ENCODE measurements at regions of chr18 and their contacts with region 1.

Region 1: DNA sequence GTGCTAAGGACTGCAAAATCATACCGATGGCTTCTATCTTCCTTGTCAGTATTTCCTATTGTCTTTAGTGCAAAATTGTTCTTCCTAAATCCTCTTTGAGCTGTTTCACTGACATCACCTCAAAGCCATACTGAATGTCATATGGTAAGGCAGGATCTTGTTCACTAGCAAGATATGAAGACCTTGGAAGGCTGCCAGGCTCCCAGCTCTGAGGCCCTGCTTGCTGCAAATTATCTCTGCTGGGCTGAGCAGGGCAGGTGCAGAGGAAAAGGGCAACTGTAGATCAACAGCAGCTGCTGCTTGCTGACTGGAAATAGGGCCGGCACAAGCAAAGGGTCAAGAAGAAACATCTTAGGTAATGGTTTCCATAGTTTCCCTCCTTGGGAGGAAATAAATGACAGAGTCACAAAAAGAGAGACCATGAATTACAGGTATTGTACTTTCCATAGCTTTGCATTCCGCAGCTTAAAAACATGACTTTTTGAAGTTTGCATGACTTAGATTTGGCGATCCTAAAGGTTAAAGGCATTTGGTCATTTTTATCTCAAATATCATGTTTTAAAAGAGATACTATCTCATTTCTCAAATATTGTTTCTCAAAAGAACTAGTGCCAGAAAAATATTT is 58.3 kb downstream of the PMAIP1 start:
- DNase-seq: no peak
- H3K4me3 ChIP-seq: no peak overlapping the region
- H3K27ac ChIP-seq: no peak overlapping the region
- H3K4me1 ChIP-seq: no peaks in the 10 kb centered on the region
- H3K27me3 ChIP-seq: no peaks in the 10 kb centered on the region
- CTCF ChIP-seq: no peak
- POLR2A ChIP-seq: no peak

Region 2: DNA sequence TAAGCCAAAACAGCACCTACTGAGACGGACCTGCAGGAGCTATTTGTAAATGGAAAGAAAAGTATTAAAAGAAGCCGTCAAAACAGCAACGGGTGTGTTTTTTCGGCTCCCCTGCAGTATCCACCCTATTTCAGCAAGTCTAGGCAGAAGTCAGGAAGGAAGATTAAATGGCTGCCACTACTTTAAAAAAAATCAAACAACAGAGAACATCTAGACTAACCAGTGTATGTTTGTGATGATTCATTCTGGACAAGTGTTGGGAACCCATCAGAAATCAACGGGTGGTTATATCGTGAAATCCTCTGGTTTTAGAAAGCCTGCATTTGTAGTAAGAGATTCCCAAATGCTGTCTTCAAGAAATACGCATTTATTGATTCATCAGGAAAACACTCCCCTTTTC is 49.3 kb before region 1 on chr18:
- intact Hi-C with region 1: loop called (anchors 2 kb)
- DNase-seq: no peak
- H3K4me3 ChIP-seq: no peak overlapping the region
- H3K27ac ChIP-seq: no peak overlapping the region
- H3K4me1 ChIP-seq: no peaks in the 10 kb centered on the region
- H3K27me3 ChIP-seq: peaks cover 0 to 5% of the 10 kb centered on the region in 2 donors
- CTCF ChIP-seq: no peak
- POLR2A ChIP-seq: no peak

Region 3: GRCh38 chr18:60485201-60485600 is 527.1 kb after region 1 on chr18:
- intact Hi-C with region 1: no loop called
- DNase-seq: no peak
- H3K4me3 ChIP-seq: no peak overlapping the region
- H3K27ac ChIP-seq: no peak overlapping the region
- H3K4me1 ChIP-seq: no peaks in the 10 kb centered on the region
- H3K27me3 ChIP-seq: no peaks in the 10 kb centered on the region
- CTCF ChIP-seq: no peak
- POLR2A ChIP-seq: no peak